A673 (cell line): ENCODE measurements at regions of chr13 and their contacts with region 1.

Region 1: DNA sequence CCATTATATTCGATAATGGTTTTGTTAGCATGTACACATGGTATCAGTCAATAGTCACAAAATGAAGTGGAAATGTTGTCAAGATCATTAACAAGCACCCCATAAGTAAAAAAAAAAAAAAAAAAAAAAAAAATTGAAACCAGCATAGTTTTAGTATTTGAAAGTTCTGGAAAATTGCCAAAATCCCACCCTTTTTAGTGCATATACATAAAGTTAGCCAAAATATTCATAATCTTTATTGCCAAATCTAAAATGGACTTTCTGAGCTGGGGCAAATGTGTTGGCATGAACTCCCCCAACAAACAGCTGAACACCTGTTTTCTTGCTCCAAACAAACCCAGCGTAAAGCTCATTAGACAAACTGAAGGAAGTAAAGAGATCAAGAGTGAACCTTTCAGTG is 73.9 kb downstream of the MZT1 start:
- DNase-seq: no peak
- H3K4me3 ChIP-seq: no peak overlapping the region
- H3K27ac ChIP-seq: no peak overlapping the region
- H3K4me1 ChIP-seq: no peaks in the 10 kb centered on the region
- H3K27me3 ChIP-seq: peaks cover 46% of the 10 kb centered on the region
- CTCF ChIP-seq: no peak

Region 2: GRCh38 chr13:72521940-72522661 is 131.4 kb before region 1 on chr13:
- CTCF ChIA-PET with region 1: no interaction called
- POLR2A ChIA-PET with region 1: interaction called, 24 read pairs
- intact Hi-C with region 1: no loop called
- DNase-seq: no peak
- H3K4me3 ChIP-seq: no peak overlapping the region
- H3K27ac ChIP-seq: no peak overlapping the region
- H3K4me1 ChIP-seq: no peaks in the 10 kb centered on the region
- H3K27me3 ChIP-seq: peaks cover 59% of the 10 kb centered on the region
- CTCF ChIP-seq: no peak

Region 3: DNA sequence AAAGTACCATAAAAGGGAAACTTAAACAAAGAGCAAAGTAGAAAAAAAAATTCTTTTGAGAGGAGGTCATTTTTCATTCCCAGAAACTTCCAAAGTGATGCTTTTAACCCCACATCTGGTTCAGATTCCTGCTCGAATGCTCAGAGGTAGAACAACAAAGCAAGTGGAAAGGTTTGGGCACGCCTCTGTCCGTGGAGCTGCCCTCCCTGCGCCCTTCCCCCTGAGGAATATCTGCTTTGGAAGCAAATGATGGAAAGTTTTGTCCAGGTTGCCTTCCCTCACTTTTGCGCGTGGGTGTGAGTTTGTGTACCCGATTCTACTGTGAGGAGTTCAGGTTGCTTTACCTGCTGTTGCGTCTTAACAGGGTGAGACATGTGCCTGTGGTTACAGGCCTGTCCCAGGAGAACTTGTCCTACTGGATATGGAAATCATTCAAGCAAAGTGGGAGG is 515.5 kb after region 1 on chr13:
- CTCF ChIA-PET with region 1: no interaction called
- POLR2A ChIA-PET with region 1: no interaction called
- intact Hi-C with region 1: no loop called
- DNase-seq: no peak
- H3K4me3 ChIP-seq: no peak overlapping the region
- H3K27ac ChIP-seq: no peak overlapping the region
- H3K4me1 ChIP-seq: peaks cover 4% of the 10 kb centered on the region
- H3K27me3 ChIP-seq: no peaks in the 10 kb centered on the region
- CTCF ChIP-seq: no peak

Region 4: DNA sequence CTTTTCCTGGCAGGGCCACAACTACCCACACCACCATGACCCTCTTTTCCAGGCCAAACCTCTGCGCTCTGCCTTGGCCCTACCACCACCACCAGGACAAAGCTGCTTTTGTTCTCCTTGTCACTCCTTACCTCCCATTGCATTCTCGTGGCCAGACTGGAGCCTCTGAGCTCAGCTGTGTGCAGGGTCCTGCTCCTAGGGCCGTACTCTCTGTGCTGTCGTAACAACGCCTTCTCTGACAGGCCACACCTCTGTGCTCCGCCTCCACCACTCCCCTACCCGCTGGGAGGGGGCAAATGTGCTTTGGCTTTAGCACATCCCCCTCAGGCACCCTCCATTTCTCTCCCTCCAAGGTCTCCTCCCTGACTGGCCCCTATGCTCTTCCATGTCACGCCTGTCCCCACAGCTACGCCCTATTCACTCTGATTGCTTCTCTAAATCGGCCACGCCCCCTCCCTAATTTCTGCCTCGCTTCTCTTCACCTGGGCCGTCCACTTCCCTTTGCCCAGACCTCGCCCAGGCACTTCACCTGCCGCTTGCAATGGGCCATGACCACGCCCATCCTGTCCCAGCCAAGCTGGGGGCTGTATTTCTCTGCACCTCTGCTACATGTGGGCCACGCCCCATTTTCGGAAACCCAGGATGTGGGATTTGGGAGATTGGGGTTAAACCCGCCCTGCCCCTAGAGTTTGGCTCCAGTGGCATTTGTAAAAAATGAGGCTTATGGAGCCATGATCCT is 1008.4 kb after region 1 on chr13:
- CTCF ChIA-PET with region 1: no interaction called
- POLR2A ChIA-PET with region 1: no interaction called
- intact Hi-C with region 1: no loop called
- DNase-seq: no peak
- H3K4me3 ChIP-seq: no peak overlapping the region
- H3K27ac ChIP-seq: no peak overlapping the region
- H3K4me1 ChIP-seq: peaks cover 5% of the 10 kb centered on the region
- H3K27me3 ChIP-seq: no peaks in the 10 kb centered on the region
- CTCF ChIP-seq: no peak